Dendritic cell treated with granulocyte-macrophage colony-stimulating factor and Interleukin-4, amounts not matched to agents 40 ng/mL and 50 ng/mL, for 4 days (primary cell): ENCODE measurements at regions of chr5 and their contacts with region 1.

Region 1: GRCh38 chr5:131634996-131635754 is at the start of gene RAPGEF6:
- H3K4me3 Mint-ChIP-seq: peak within 1 kb of the TSS; percentile 93
- H3K27ac Mint-ChIP-seq: peak within 1 kb of the TSS; percentile 98
- H3K4me1 Mint-ChIP-seq: peaks cover 8% of the 10 kb centered on the region
- H3K27me3 Mint-ChIP-seq: no peaks in the 10 kb centered on the region

Region 2: GRCh38 chr5:131773805-131774204 is 138.6 kb after region 1 on chr5:
- intact Hi-C with region 1: no loop called
- H3K4me3 Mint-ChIP-seq: no peak overlapping the region
- H3K27ac Mint-ChIP-seq: no peak overlapping the region
- H3K4me1 Mint-ChIP-seq: peaks cover 24% of the 10 kb centered on the region
- H3K27me3 Mint-ChIP-seq: no peaks in the 10 kb centered on the region

Region 3: DNA sequence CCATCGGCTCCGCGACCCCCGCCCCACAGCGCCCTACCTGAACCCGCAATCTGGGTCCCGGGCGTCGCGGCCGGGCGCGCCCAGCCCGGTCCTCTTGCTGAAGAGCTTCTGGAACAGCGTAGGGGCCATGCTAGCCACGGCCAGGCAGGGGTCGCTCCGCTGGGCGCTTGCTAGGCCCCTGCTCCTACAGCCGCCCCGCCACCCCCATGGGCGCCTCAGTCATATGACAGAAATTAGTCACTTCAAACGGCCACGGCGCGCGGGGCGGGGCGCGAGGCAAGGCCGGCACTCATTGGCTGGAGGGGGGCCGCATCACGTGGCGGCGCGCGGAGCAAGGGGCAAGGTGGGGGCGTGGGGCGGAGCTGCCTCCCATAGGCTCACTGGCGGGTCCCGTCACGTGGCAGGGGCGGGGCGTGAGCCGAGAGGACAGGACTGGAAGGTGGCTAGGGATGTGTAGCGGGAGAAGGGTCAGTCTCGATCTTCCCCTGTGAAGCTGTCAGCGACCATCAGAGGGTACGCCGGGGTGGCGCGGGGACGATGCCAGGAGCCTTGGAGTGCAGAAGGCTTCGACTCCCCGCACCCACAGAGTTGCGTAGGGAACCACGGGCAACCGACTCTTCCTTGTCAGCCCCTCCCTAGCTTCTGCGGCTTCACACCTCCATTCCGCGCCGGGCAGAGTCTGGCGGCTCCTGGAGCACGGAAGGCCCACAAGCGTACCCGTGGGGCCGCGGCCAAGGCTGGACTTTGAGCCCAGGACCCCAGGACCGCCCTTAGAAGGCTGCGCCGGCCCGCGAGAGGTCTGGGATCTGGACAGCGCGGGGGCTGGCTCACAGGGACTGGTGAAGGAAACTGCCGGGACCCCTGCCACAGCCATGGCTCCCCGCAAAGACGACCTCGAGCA is 161.9 kb after region 1 on chr5 and contains the start of gene FNIP1:
- intact Hi-C with region 1: loop called (anchors 2 kb)
- H3K4me3 Mint-ChIP-seq: peak within 1 kb of the TSS; percentile 96
- H3K27ac Mint-ChIP-seq: peak within 1 kb of the TSS; percentile 96
- H3K4me1 Mint-ChIP-seq: peaks cover 25% of the 10 kb centered on the region
- H3K27me3 Mint-ChIP-seq: no peaks in the 10 kb centered on the region